ENCODE measurements at regions of chr2 and their contacts with region 1.

Region 1: DNA sequence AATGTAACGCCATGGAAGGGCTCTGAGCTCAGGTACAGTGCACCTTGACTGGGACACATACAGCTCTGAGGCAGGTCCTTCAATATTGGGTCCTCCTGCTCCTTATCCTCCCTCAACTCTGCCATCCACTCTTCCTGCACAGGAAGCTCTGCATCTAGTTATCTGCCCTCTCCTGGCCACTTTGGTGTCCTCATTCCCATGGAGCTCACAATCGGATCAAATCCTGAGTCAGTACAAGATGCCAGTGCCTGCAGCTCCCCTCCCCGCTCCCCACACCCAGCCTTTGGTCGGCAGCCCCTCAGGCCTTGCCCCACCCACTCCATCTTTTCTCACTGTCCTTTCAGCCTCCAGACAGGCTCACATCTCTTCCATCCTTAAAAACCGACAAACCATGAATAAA is 58.0 kb downstream of the LRRFIP1 start:
- DNase-seq: peak; percentile 66
- ATAC-seq: peak; percentile 74
- H3K4me3 ChIP-seq: no peak overlapping the region
- H3K27ac ChIP-seq: no peak overlapping the region
- H3K4me1 ChIP-seq: peaks cover 83% of the 10 kb centered on the region
- H3K27me3 ChIP-seq: no peaks in the 10 kb centered on the region
- CTCF ChIP-seq: peak; percentile 80
- EP300 ChIP-seq: no peak
- POLR2A ChIP-seq: no peak
- RAD21 ChIP-seq: peak; percentile 49; the same call in 1 of the 2 replicates

Region 2: GRCh38 chr2:237581751-237582746 is 103.4 kb before region 1 on chr2:
- CTCF ChIA-PET with region 1: interaction called, 8 read pairs
- POLR2A ChIA-PET with region 1: interaction called, 3 read pairs
- in situ Hi-C with region 1: no loop called
- intact Hi-C with region 1: loop called (anchors 1 kb)
- DNase-seq: peak; percentile 82
- ATAC-seq: peak; percentile 66
- H3K4me3 ChIP-seq: peak overlapping the region in 1 of 3 experiments; percentile 38; a peak in 3 of 6 replicates
- H3K27ac ChIP-seq: peak overlapping the region; percentile 66
- H3K4me1 ChIP-seq: peaks cover 57% of the 10 kb centered on the region
- H3K27me3 ChIP-seq: no peaks in the 10 kb centered on the region
- CTCF ChIP-seq: peak; percentile 82
- EP300 ChIP-seq: peak in 1 of 2 experiments; percentile 52; a peak in 2 of 4 replicates
- POLR2A ChIP-seq: no peak; a peak in 1 of 4 replicates
- RAD21 ChIP-seq: peak; percentile 70; the same call in 1 of the 2 replicates

Region 3: GRCh38 chr2:237674731-237675276 is 10.6 kb before region 1 on chr2:
- CTCF ChIA-PET with region 1: interaction called, 21 read pairs
- POLR2A ChIA-PET with region 1: interaction called, 4 read pairs
- in situ Hi-C with region 1: no loop called
- intact Hi-C with region 1: no loop called
- DNase-seq: peak; percentile 66
- ATAC-seq: peak; percentile 93
- H3K4me3 ChIP-seq: peak overlapping the region in 2 of 3 experiments; percentile 13 to 53; a peak in 3 of 6 replicates
- H3K27ac ChIP-seq: peak overlapping the region; percentile 46
- H3K4me1 ChIP-seq: peaks cover 83% of the 10 kb centered on the region
- H3K27me3 ChIP-seq: no peaks in the 10 kb centered on the region
- CTCF ChIP-seq: peak; percentile 36; the same call in 1 of the 2 replicates
- EP300 ChIP-seq: no peak; a peak in 1 of 4 replicates
- POLR2A ChIP-seq: peak; percentile 24 to 34; a peak in 1 of 4 replicates
- RAD21 ChIP-seq: no peak

Region 4: DNA sequence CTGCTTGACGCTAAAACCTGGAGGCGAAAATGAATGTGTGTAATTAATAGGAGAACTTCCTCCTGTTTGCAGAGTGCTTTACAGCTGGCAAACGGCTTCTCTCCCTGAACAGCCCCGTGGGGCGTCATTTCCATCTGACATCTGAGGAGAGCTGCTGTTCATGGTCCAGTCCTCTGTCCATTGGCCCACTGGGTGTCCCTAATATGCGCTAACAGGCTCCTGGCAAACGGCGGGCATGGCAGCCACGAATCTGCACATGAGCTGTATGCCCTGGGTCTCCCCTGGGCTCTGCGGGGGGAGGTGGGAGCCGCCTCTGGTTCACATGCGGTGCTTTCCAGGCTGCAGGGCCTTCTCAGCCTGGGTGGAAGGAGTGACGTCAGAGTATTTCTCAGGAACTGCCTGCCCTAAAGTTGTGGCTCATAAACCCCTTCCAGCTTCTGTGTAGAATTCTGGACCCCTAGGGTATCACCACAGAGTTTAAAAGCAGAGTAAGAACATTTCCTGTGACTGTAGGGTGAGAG is 15.2 kb after region 1 on chr2:
- CTCF ChIA-PET with region 1: no interaction called
- POLR2A ChIA-PET with region 1: no interaction called
- in situ Hi-C with region 1: no loop called
- intact Hi-C with region 1: no loop called
- DNase-seq: no peak
- ATAC-seq: no peak
- H3K4me3 ChIP-seq: no peak overlapping the region
- H3K27ac ChIP-seq: no peak overlapping the region
- H3K4me1 ChIP-seq: peaks cover 53% of the 10 kb centered on the region
- H3K27me3 ChIP-seq: no peaks in the 10 kb centered on the region
- CTCF ChIP-seq: no peak
- EP300 ChIP-seq: no peak
- POLR2A ChIP-seq: no peak
- RAD21 ChIP-seq: no peak

Region 5: DNA sequence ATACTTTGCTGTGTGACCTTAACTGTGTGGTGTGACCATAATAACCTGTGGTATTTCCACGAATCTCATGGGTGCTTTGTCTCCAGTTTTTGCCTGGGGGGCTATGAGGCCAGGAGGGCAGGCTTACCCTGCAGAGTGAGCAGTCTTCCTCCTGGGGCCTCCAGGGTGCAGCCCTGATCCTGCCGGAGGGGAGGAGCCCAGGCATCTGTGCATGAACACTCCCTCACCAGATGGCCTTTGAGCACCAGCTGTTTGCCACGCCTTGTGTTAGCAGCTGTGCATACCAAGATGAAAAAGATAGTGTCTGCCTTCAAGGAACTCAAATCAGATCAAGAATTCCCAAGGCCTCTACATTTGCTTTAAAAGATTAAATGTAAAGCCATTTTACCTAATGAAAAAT is 38.2 kb after region 1 on chr2:
- CTCF ChIA-PET with region 1: no interaction called
- POLR2A ChIA-PET with region 1: no interaction called
- in situ Hi-C with region 1: no loop called
- intact Hi-C with region 1: no loop called
- DNase-seq: peak; percentile 74
- ATAC-seq: peak; percentile 91
- H3K4me3 ChIP-seq: no peak overlapping the region
- H3K27ac ChIP-seq: no peak overlapping the region
- H3K4me1 ChIP-seq: peaks cover 44% of the 10 kb centered on the region
- H3K27me3 ChIP-seq: no peaks in the 10 kb centered on the region
- CTCF ChIP-seq: peak; percentile 66
- EP300 ChIP-seq: peak in 1 of 2 experiments; percentile 27; a peak in 1 of 4 replicates
- POLR2A ChIP-seq: no peak
- RAD21 ChIP-seq: peak; percentile 40; the same call in 1 of the 2 replicates